ENCODE measurements at regions of chr16 and their contacts with region 1.

Region 1: DNA sequence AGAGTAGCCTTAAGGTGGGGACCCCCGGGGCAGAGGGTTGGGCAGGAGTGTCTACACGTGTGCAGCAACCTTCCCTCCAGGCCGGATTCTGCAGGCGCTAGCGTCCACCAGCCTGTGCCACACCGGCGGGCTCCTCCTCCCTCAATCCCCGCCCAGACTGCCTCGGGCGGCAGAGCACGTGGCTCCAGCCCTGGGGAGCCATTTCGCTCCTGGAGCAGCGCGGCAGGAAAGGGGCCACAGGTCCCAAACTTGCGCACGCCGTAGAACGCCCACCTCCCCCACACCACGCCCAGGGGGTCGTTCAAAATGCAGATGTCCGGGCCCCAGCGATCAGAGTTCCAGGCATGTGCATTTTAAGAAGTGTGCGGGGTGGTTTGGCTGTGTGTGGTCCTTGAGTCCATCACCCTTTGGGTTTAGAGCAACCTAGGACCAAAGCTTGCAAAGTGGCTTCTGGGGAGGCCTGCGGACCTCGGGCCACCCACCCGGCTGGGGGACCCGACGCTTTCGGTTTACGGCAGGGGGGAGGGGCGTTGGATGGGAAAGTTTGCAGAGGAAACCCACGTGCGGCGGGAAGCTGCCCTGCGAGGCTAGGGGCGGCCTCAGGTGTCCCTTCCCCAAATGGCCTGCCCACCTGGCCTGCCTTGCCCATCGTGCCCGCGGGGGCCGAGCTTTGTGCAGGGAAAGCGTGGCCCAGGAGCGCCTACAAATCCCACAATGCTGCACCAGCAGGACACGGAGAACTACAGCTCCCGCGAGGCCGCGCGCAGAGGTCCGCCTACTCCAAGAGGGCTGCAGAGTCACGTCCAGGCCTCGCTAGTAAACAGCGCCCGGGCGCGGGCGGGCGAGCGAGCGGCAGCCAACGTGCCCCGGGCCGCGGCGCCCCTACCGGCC is 1.4 kb downstream of the TFAP4 start:
- DNase-seq: peak; percentile 63
- ATAC-seq: peak; percentile 90
- H3K4me3 ChIP-seq: peak overlapping the region; percentile 70 to 85
- H3K27ac ChIP-seq: peak overlapping the region; percentile 95
- H3K4me1 ChIP-seq: peaks cover 15% of the 10 kb centered on the region
- H3K27me3 ChIP-seq: no peaks in the 10 kb centered on the region
- CTCF ChIP-seq: no peak

Region 2: GRCh38 chr16:4004206-4004605 is 267.2 kb before region 1 on chr16:
- CTCF ChIA-PET with region 1: interaction called, 10 read pairs
- POLR2A ChIA-PET with region 1: no interaction called
- in situ Hi-C with region 1: no loop called
- intact Hi-C with region 1: no loop called
- DNase-seq: no peak
- ATAC-seq: no peak
- H3K4me3 ChIP-seq: no peak overlapping the region
- H3K27ac ChIP-seq: no peak overlapping the region
- H3K4me1 ChIP-seq: 0 out of 2 replicates have a peak, but pooled peaks cover 3% of the 10 kb centered on the region
- H3K27me3 ChIP-seq: no peaks in the 10 kb centered on the region
- CTCF ChIP-seq: no peak

Region 3: DNA sequence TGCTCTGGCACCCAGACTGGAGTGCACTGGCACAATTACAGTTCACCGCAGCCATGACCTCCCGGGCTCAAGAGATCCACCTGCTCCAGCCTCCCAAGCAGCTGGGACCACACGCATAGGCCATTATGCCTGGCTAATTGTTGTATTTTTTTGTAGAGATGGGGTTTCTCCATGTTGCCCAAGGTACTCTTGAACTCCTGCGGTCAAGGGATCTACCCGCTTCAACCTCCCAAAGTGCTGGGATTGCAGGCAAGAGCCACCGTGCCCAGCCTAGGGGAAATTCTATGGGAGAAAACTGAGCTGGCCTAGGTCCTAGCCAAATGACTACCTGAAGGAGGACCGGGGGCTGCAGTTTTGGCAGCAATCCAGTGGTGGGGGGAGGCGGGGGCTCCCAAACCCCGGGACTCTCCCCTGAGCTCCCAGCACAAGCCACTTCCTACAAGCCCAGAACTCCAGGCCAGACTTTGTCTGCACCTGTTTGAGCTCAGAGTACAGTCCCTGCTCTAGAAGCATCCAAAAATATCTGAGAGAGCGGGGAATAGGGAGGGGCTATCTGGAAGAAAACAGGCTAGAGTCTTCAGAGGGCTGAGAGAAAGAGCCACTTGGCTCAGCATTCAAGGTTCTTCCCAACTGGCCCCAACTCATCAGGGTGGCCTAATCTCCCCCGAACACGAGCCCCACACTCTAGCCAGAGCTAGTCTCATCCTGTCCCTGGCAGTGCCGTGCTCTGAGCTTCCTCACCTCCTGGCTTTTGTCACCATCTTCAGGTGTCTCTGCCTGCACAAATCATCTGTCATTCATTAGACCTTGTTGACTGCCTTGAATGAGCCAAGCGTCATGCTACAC is 38.7 kb before region 1 on chr16:
- CTCF ChIA-PET with region 1: no interaction called
- POLR2A ChIA-PET with region 1: interaction called, 10 read pairs
- in situ Hi-C with region 1: no loop called
- intact Hi-C with region 1: no loop called
- DNase-seq: no peak
- ATAC-seq: no peak
- H3K4me3 ChIP-seq: no peak overlapping the region
- H3K27ac ChIP-seq: no peak overlapping the region
- H3K4me1 ChIP-seq: no peaks in the 10 kb centered on the region
- H3K27me3 ChIP-seq: no peaks in the 10 kb centered on the region
- CTCF ChIP-seq: no peak

Region 4: DNA sequence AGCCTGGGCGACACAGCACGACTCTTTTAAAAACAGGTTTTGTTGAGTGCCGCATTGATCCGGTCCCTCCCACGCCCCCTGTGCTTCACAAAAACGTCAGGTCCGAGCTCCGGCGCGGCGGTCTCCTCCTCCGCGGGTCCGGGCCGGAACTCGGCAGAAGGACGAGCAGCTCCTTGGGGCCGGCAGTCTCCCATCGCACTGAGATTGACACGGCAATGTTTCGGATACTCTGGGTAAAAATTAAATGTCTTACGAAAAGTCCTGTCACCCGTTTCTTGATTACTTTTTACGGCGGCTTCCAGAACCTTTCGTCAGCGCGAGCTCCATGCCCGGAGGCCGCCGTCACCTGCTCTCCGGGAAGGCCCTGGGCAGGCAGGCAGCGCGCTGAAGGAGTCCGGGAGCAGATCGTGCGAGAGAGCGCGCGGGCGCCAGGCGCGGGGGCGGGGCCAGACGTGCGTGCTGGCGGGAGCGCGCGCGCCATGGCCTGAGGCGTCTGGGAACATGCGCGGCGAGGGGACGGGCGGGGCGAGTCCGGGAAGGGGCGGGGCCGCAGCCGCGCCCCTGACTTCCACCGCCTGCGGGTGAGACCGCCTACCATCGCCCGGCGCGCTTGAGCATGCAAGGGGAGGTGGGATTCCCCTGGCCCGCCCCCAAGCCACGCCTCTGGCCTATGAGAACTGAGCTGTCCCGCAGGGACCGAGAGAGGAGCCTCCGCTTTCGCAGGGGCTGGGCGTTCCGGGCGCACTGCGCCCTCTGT is 17.8 kb before region 1 on chr16:
- CTCF ChIA-PET with region 1: interaction called, 11 read pairs
- POLR2A ChIA-PET with region 1: no interaction called
- in situ Hi-C with region 1: no loop called
- intact Hi-C with region 1: no loop called
- DNase-seq: peak; percentile 89
- ATAC-seq: peak; percentile 99
- H3K4me3 ChIP-seq: peak overlapping the region; percentile 62 to 67
- H3K27ac ChIP-seq: peak overlapping the region; percentile 87
- H3K4me1 ChIP-seq: no peaks in the 10 kb centered on the region
- H3K27me3 ChIP-seq: no peaks in the 10 kb centered on the region
- CTCF ChIP-seq: no peak

Region 5: DNA sequence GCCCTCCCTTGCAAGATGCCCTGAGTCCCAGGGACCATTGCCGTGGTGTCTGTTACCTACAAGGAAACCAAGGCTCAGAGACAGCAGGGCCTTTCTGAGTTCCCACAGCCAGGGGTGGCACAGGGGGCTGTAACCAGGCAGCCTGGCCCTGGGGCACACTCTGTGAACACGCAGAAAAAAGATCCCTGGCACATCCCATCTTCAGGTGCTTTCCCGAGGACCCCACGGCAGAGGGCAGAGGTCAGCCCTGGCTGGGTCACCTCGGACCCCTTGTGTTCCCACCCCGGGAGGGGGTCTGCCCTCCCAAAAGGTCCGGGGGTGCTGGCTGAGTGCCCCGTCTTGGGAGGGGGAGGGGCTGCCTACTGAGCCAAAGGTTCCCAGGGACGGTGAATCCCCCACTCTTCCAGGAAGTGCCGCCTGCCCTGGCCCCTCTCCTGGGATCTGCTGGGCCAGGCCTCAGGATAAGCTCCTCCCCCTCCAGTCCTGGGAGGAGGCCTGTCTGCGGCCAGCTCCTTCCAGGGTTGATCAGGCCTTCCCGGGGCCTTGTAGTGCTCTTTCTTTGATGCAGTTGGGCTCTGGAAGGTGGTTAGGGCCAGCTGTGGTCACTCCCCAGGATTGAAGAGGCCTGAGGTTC is 52.5 kb after region 1 on chr16:
- CTCF ChIA-PET with region 1: interaction called, 14 read pairs
- POLR2A ChIA-PET with region 1: no interaction called
- in situ Hi-C with region 1: no loop called
- intact Hi-C with region 1: no loop called
- DNase-seq: no peak
- ATAC-seq: peak; percentile 62
- H3K4me3 ChIP-seq: peak overlapping the region; percentile 6 to 30; a peak in 3 of 4 replicates
- H3K27ac ChIP-seq: peak overlapping the region; percentile 92
- H3K4me1 ChIP-seq: peaks cover 95% of the 10 kb centered on the region
- H3K27me3 ChIP-seq: no peaks in the 10 kb centered on the region
- CTCF ChIP-seq: no peak

Region 6: DNA sequence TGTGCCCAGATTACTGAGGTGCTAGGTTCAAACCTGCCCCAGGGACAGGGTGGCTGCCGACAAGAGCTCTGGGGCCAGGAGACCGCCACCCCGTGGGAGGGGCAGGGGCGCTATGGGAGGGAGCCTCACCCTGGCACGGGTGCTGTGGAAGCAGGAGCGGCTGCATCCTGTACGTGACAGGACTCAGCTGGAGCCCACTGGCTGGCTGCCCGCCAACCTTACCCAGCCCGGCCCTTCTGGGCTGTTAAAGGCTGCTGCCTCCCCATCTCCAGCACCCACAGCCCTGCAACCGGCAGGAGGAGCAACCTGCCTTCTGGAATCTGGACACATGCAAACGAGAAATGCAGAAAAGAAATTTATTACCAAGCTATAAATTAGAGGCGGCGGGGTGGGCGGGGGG is 68.5 kb after region 1 on chr16:
- CTCF ChIA-PET with region 1: no interaction called
- POLR2A ChIA-PET with region 1: no interaction called
- in situ Hi-C with region 1: no loop called
- intact Hi-C with region 1: loop called (anchors 5 kb)
- DNase-seq: no peak
- ATAC-seq: peak; percentile 5; the same call in 1 of the 2 replicates
- H3K4me3 ChIP-seq: no peak overlapping the region
- H3K27ac ChIP-seq: peak overlapping the region; percentile 80
- H3K4me1 ChIP-seq: peaks cover 59% of the 10 kb centered on the region
- H3K27me3 ChIP-seq: no peaks in the 10 kb centered on the region
- CTCF ChIP-seq: no peak

Region 7: GRCh38 chr16:4500272-4500671 is 228.9 kb after region 1 on chr16:
- CTCF ChIA-PET with region 1: no interaction called
- POLR2A ChIA-PET with region 1: interaction called, 16 read pairs
- in situ Hi-C with region 1: no loop called
- intact Hi-C with region 1: no loop called
- DNase-seq: no peak
- ATAC-seq: peak; percentile 94
- H3K4me3 ChIP-seq: no peak overlapping the region
- H3K27ac ChIP-seq: peak overlapping the region; percentile 45; the same call in 1 of the 2 replicates
- H3K4me1 ChIP-seq: peaks cover 28% of the 10 kb centered on the region
- H3K27me3 ChIP-seq: no peaks in the 10 kb centered on the region
- CTCF ChIP-seq: no peak

Measured in Panc1 (cell line).